ENCODE measurements at regions of chr6 and their contacts with region 1.

Region 1: DNA sequence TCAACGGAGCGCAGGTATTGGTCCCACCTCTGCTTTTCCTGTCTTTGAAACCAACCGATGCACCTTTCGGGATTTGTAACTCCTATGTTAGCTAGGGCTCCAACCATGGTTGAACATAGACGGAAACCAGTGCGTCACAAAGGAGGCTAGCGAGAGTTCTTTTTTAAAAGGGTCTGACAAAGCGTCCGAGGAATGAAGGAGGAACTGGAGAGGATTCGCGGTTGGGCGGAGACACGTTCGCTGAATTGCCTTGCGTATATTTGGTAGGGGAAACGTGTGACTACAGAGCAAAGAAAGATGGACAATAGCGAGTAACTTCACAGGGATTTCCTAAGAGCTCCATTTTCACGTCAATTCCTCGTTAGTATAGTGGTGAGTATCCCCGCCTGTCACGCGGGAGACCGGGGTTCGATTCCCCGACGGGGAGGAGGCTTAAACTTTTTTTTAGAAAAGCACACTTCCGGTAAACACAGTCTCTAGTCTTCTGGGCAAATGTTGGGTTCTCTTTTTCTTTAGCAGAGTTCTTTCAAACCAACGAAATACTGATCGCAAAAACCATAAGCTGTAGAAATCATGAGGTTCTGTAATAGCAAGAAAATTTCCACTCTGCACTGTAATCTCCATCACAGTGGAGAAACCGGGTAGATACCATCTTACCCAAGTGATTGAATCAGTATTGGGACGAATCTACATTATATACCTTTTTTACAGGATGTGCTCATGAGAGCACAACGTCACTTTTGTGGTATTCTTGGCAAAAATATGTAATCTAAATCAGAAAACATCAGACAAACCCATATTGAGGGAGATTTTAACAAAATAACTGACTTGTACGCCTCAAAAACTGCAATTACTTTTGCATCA is 6.6 kb upstream of the ZNF184 start:
- DNase-seq: peak; percentile 89
- H3K4me3 ChIP-seq: peak overlapping the region; percentile 62 to 79 (median 76)
- H3K27ac ChIP-seq: peak overlapping the region; percentile 90
- H3K4me1 ChIP-seq: peaks cover 5% of the 10 kb centered on the region
- H3K27me3 ChIP-seq: no peaks in the 10 kb centered on the region
- CTCF ChIP-seq: no peak

Region 2: DNA sequence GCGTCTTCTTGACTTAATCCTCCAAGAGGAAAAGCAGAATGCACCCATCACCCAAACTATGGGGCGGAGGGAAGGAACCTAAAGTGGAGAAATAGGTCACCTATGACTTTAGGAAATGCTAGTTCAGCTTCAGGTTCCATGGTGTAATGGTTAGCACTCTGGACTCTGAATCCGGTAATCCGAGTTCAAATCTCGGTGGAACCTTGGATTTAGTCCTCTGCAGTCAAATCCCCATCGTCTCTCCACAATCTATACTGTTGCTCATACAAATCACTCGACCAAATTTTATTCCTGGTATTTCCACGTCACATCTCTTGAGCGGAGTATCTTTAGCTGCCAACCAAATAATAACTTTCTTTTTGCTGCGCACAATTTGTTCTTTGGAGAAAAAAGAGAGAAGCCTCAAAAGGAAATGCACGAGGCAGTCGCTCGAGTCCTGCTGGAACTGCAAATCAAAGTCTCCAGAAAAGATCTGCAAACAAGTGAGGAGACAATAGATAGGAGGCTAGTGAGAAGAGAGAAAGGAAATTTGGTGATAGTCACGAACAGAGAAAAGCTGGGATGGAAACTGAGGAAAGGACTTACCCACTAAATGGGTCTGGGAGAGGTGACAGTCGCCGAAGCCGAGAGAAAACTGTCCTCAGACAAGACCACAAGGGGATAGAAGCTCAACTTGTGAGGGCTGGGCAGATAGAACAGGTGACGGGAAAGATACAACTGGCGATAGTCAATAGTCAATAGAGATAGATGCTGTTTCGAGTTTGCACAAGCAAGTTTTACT is 184.1 kb before region 1 on chr6:
- CTCF ChIA-PET with region 1: no interaction called
- dilution Hi-C with region 1: no loop called
- in situ Hi-C with region 1: no loop called
- intact Hi-C with region 1: loop called (anchors 5 kb)
- DNase-seq: peak; percentile 82
- H3K4me3 ChIP-seq: peak overlapping the region; percentile 54 to 77 (median 63)
- H3K27ac ChIP-seq: no peak overlapping the region
- H3K4me1 ChIP-seq: peaks cover 4% of the 10 kb centered on the region
- H3K27me3 ChIP-seq: no peaks in the 10 kb centered on the region
- CTCF ChIP-seq: no peak

Region 3: GRCh38 chr6:27332692-27333641 is 146.6 kb before region 1 on chr6:
- CTCF ChIA-PET with region 1: no interaction called
- dilution Hi-C with region 1: no loop called
- in situ Hi-C with region 1: no loop called
- intact Hi-C with region 1: loop called (anchors 1 kb)
- DNase-seq: peak; percentile 76
- H3K4me3 ChIP-seq: peak overlapping the region; percentile 45 to 76 (median 72)
- H3K27ac ChIP-seq: no peak overlapping the region
- H3K4me1 ChIP-seq: peaks cover 3% of the 10 kb centered on the region
- H3K27me3 ChIP-seq: no peaks in the 10 kb centered on the region
- CTCF ChIP-seq: no peak

Region 4: DNA sequence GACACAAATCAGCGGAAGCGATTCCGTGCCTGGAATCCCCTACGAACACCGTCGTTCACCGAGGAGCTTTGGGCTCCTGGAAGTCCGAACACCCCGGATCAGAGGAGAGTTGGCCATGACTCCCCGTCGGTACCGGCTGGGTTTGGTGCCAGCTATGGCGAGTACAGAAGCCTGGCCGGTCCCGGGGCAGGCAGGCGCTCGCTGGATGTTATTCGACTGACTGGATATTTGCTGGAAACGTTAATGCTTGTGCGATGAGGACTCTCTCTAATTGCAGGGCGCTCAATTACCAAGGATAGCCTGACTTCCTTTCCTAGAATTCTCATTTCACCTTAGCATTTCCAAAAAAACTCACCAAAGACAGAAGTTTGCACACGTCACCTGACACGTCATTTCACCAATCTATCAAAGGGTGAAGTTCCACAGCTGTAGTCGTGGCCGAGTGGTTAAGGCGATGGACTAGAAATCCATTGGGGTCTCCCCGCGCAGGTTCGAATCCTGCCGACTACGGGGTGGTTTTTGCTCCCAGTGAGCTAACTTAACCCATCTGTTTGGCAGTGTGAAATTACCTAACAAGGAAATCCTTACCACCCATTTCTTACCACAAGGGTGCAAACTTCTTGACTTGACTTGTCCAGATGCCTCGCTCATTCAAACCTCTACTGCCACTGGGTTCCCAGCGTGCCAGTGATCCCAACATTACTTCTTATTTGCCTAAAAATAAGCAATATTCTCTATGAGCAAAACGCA is 16.0 kb after region 1 on chr6:
- CTCF ChIA-PET with region 1: no interaction called
- dilution Hi-C with region 1: no loop called
- in situ Hi-C with region 1: no loop called
- intact Hi-C with region 1: loop called (anchors 2 kb)
- DNase-seq: peak; percentile 93
- H3K4me3 ChIP-seq: peak overlapping the region; percentile 62 to 70 (median 65)
- H3K27ac ChIP-seq: peak overlapping the region; percentile 50
- H3K4me1 ChIP-seq: peaks cover 4% of the 10 kb centered on the region
- H3K27me3 ChIP-seq: no peaks in the 10 kb centered on the region
- CTCF ChIP-seq: peak in 1 of 2 donors; percentile 10

Region 5: GRCh38 chr6:27545271-27546046 is 65.9 kb after region 1 on chr6:
- CTCF ChIA-PET with region 1: no interaction called
- dilution Hi-C with region 1: no loop called
- in situ Hi-C with region 1: no loop called
- intact Hi-C with region 1: loop called (anchors 2 kb)
- DNase-seq: peak; percentile 93
- H3K4me3 ChIP-seq: peak overlapping the region; percentile 51 to 60 (median 56)
- H3K27ac ChIP-seq: peak overlapping the region; percentile 61
- H3K4me1 ChIP-seq: peaks cover 6% of the 10 kb centered on the region
- H3K27me3 ChIP-seq: no peaks in the 10 kb centered on the region
- CTCF ChIP-seq: no peak

Measured in mammary epithelial cell (primary cell).